ENCODE measurements at regions of chr17 and their contacts with region 1.

Region 1: GRCh38 chr17:64420143-64420971 is 28.6 kb upstream of the MILR1 start:
- DNase-seq: peak; percentile 76
- H3K4me3 ChIP-seq: no peak overlapping the region; a peak in 1 of 4 replicates
- H3K27ac ChIP-seq: no peak overlapping the region
- H3K4me1 ChIP-seq: peaks cover 0 to 8% of the 10 kb centered on the region in 2 experiments; a peak in 1 of 4 replicates
- H3K27me3 ChIP-seq: no peaks in the 10 kb centered on the region
- CTCF ChIP-seq: peak; percentile 97
- EP300 ChIP-seq: no peak
- RAD21 ChIP-seq: peak; percentile 91

Region 2: DNA sequence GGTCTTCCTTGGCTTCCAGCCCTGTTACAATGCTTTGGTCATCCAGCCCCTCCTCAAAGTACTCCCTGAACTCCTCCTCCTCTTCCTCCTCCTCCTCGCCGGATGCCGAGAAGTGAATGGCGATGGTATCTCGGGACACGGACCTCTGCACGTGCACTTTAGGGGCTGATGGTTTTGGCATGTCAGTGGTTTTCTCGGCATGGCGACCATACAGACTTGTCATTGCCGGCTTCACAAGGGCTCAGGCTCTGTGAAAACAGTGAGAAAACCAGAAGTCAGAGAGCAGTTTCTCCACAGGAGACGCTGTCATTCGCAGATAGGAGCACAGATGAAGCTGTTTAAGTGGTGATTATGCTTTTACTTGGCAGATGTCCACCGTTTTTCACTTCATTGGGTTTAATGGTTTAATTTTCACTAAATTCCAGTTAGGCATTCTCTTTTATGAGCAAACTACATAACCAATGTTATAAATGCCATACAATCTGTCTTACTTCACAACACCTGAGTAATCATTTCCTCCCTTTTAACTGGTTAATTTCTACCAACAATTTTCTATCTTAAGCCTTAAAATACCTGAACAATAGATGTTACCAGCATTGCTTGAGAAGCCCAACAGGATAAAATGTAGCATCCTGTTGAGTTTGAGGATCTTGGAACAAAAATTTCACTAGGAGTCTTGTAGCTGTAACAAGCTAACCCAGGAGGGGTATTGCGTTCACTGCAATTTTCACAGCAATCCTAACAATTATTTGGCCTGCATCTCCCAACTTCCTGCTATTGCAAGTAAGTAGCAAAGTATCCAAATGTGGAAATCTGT is 206.2 kb before region 1 on chr17:
- CTCF ChIA-PET with region 1: no interaction called
- POLR2A ChIA-PET with region 1: no interaction called
- DNase-seq: no peak
- H3K4me3 ChIP-seq: no peak overlapping the region
- H3K27ac ChIP-seq: peak overlapping the region; percentile 87 to 91; a peak in 3 of 4 replicates
- H3K4me1 ChIP-seq: peaks cover 48 to 55% of the 10 kb centered on the region in 2 experiments
- H3K27me3 ChIP-seq: no peaks in the 10 kb centered on the region
- CTCF ChIP-seq: no peak
- EP300 ChIP-seq: no peak
- RAD21 ChIP-seq: no peak

Region 3: GRCh38 chr17:64297467-64298098 is 122.8 kb before region 1 on chr17:
- CTCF ChIA-PET with region 1: interaction called, 501 read pairs
- POLR2A ChIA-PET with region 1: no interaction called
- DNase-seq: no peak
- H3K4me3 ChIP-seq: no peak overlapping the region
- H3K27ac ChIP-seq: no peak overlapping the region
- H3K4me1 ChIP-seq: no peaks in the 10 kb centered on the region
- H3K27me3 ChIP-seq: no peaks in the 10 kb centered on the region; the same call in 1 of the 2 replicates
- CTCF ChIP-seq: no peak
- EP300 ChIP-seq: no peak
- RAD21 ChIP-seq: no peak

Region 4: GRCh38 chr17:64357191-64357981 is 63.0 kb before region 1 on chr17:
- CTCF ChIA-PET with region 1: interaction called, 11 read pairs
- POLR2A ChIA-PET with region 1: no interaction called
- DNase-seq: no peak
- H3K4me3 ChIP-seq: no peak overlapping the region
- H3K27ac ChIP-seq: peak overlapping the region in 1 of 2 experiments; percentile 79; a peak in 1 of 4 replicates
- H3K4me1 ChIP-seq: peaks cover 0 to 24% of the 10 kb centered on the region in 2 experiments; a peak in 3 of 4 replicates
- H3K27me3 ChIP-seq: no peaks in the 10 kb centered on the region
- CTCF ChIP-seq: no peak; the same call in 1 of the 2 replicates
- EP300 ChIP-seq: peak in 1 of 2 experiments; percentile 97; a peak in 2 of 4 replicates
- RAD21 ChIP-seq: no peak

Region 5: GRCh38 chr17:64406321-64407200 is 13.8 kb before region 1 on chr17:
- CTCF ChIA-PET with region 1: interaction called, 54 read pairs
- POLR2A ChIA-PET with region 1: no interaction called
- DNase-seq: no peak
- H3K4me3 ChIP-seq: no peak overlapping the region
- H3K27ac ChIP-seq: no peak overlapping the region
- H3K4me1 ChIP-seq: no peaks in the 10 kb centered on the region
- H3K27me3 ChIP-seq: no peaks in the 10 kb centered on the region
- CTCF ChIP-seq: no peak
- EP300 ChIP-seq: no peak
- RAD21 ChIP-seq: no peak

Region 6: DNA sequence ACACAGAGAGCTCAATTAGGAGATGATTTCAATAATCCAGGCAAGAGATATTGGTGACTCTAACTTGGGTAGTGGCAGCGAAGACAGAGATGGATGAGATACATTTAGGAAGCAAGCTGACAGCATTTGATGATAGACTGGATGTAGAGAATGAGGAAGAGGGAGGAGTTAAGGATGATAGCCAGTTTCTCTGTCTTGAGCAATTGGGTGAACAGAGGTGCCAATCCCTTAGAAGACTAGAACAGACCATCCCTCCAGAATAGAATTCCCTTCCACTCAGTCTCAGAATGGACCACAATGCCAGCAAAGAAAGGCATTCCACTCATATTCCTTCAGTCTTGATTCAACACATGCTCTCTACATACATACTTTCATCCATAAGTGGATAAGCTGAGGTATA is 59.3 kb after region 1 on chr17:
- CTCF ChIA-PET with region 1: interaction called, 71 read pairs
- POLR2A ChIA-PET with region 1: no interaction called
- DNase-seq: no peak
- H3K4me3 ChIP-seq: no peak overlapping the region
- H3K27ac ChIP-seq: no peak overlapping the region
- H3K4me1 ChIP-seq: no peaks in the 10 kb centered on the region
- H3K27me3 ChIP-seq: no peaks in the 10 kb centered on the region
- CTCF ChIP-seq: no peak
- EP300 ChIP-seq: no peak
- RAD21 ChIP-seq: no peak

Region 7: DNA sequence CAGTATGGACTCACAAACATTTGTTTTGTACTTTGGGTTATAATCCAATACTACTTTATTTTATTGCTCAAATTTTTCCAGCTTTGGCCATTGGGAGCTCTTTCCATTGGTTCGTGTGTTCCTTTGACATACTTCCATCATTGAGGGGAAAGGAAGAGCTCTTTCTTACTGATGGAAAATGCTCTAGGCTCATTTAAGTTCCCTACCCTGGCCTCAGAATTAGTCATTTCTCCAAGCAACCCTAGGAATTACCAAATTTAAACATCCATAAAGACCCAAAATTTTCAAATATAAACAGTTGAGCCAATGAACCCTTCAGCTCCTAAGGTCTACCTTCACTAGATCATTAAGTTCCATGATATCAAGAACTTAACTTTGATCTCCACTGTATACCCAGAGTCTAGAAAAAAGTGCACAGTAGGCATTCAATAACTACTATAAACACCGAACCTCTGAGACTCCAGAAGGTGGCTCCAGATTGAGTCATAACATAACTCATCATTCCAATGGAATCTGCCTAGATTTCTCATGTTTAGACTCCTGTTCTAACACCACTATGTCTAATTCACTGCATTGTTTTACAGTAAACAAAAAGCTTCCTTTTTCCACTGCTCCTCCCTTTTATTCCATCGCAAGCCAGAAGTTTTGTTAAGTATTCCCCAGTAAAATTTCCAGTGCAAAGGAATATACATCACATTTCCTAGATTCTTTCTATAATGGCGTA is 202.7 kb after region 1 on chr17:
- CTCF ChIA-PET with region 1: no interaction called
- POLR2A ChIA-PET with region 1: no interaction called
- DNase-seq: no peak
- H3K4me3 ChIP-seq: no peak overlapping the region
- H3K27ac ChIP-seq: peak overlapping the region in 1 of 2 experiments; percentile 68; a peak in 2 of 4 replicates
- H3K4me1 ChIP-seq: peaks cover 0 to 21% of the 10 kb centered on the region in 2 experiments; a peak in 2 of 4 replicates
- H3K27me3 ChIP-seq: no peaks in the 10 kb centered on the region
- CTCF ChIP-seq: no peak
- EP300 ChIP-seq: no peak
- RAD21 ChIP-seq: no peak

Region 8: GRCh38 chr17:64653325-64653984 is 233.1 kb after region 1 on chr17:
- CTCF ChIA-PET with region 1: interaction called, 43 read pairs
- POLR2A ChIA-PET with region 1: no interaction called
- DNase-seq: no peak
- H3K4me3 ChIP-seq: peak overlapping the region in 1 of 2 experiments; percentile 1; a peak in 1 of 4 replicates
- H3K27ac ChIP-seq: peak overlapping the region in 1 of 2 experiments; percentile 33; a peak in 2 of 4 replicates
- H3K4me1 ChIP-seq: peaks cover 2 to 31% of the 10 kb centered on the region in 2 experiments
- H3K27me3 ChIP-seq: no peaks in the 10 kb centered on the region
- CTCF ChIP-seq: no peak
- EP300 ChIP-seq: no peak
- RAD21 ChIP-seq: no peak